HCT116 (cell line): ENCODE measurements at regions of chr1 and their contacts with region 1.

Region 1: GRCh38 chr1:1349256-1350012 is at the start of gene DVL1:
- DNase-seq: no peak
- ATAC-seq: peak; percentile 29
- H3K4me3 ChIP-seq: peak within 1 kb of the TSS; percentile 80 to 87
- H3K27ac ChIP-seq: peak within 1 kb of the TSS; percentile 100
- H3K4me1 ChIP-seq: peaks cover 38 to 67% of the 10 kb centered on the region in 2 experiments
- H3K27me3 ChIP-seq: no peaks in the 10 kb centered on the region
- CTCF ChIP-seq: peak in 2 of 3 experiments; percentile 32 to 48; a peak in 3 of 6 replicates
- POLR2A ChIP-seq: no peak
- RAD21 ChIP-seq: no peak
- total RNA-seq, gene DVL1: 160 TPM

Region 2: GRCh38 chr1:1069061-1069708 is 280.2 kb before region 1 on chr1:
- CTCF ChIA-PET with region 1: no interaction called
- POLR2A ChIA-PET with region 1: no interaction called
- RAD21 ChIA-PET with region 1: no interaction called
- intact Hi-C with region 1: loop called (anchors 5 kb)
- DNase-seq: peak; percentile 65
- ATAC-seq: peak; percentile 61
- H3K4me3 ChIP-seq: peak overlapping the region; percentile 50 to 64
- H3K27ac ChIP-seq: peak overlapping the region; percentile 79
- H3K4me1 ChIP-seq: peaks cover 36 to 64% of the 10 kb centered on the region in 2 experiments
- H3K27me3 ChIP-seq: no peaks in the 10 kb centered on the region
- CTCF ChIP-seq: no peak
- POLR2A ChIP-seq: no peak
- RAD21 ChIP-seq: no peak

Region 3: GRCh38 chr1:1307908-1308755 is 41.3 kb before region 1 on chr1 and contains the starts of genes ACAP3 and PUSL1:
- CTCF ChIA-PET with region 1: no interaction called
- POLR2A ChIA-PET with region 1: no interaction called
- RAD21 ChIA-PET with region 1: no interaction called
- intact Hi-C with region 1: loop called (anchors 5 kb)
- DNase-seq: peak; percentile 83
- ATAC-seq: peak; percentile 53
- H3K4me3 ChIP-seq: peak within 1 kb of the TSS; percentile 60 to 86
- H3K27ac ChIP-seq: peak within 1 kb of the TSS; percentile 99
- H3K4me1 ChIP-seq: peaks cover 36 to 55% of the 10 kb centered on the region in 2 experiments
- H3K27me3 ChIP-seq: no peaks in the 10 kb centered on the region
- CTCF ChIP-seq: no peak
- POLR2A ChIP-seq: no peak
- RAD21 ChIP-seq: no peak
- total RNA-seq, gene ACAP3: 38.8 TPM
- total RNA-seq, gene PUSL1: 47.2 TPM

Region 4: DNA sequence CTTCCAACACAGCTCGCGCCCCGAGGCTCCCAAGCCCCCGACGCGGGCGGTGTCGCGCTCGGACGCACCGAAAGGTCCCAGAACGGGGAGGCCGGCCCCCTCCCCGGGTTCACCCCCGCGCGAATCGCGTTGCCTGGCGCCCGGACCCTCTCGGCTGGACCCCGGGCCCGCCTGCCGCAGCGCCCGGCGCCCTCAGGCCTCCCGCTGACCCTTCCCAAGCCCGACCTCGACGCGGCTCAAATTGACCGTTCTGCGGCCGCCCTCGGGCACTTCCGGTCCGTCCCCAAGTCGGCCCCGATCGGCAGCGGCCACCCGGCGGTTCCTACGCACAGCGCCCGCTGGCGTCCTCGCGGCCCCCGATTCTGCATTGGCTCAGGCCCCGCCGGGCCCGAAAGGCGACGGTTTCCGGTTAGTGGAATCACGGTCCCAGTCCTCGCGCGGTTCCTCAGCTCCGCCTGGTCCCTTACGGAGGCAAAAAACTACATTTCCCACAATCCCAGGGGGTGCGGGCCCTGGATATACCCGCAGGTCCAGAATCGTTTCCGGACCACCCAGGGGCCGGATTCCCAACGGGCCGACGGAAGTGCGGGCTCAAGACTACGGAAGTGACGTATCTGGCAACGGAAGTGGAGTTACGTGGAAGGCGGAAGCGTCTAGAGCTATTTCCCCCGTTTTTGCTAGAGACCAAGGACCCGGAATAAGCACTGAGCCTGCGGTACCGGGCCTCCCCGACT is 25.7 kb after region 1 on chr1 and contains the start of gene AURKAIP1:
- CTCF ChIA-PET with region 1: interaction called, 3 read pairs
- POLR2A ChIA-PET with region 1: interaction called, 4 read pairs
- RAD21 ChIA-PET with region 1: interaction called in 1 of 2 experiments, 3 read pairs
- intact Hi-C with region 1: loop called (anchors 2 kb)
- DNase-seq: peak; percentile 100
- ATAC-seq: peak; percentile 89
- H3K4me3 ChIP-seq: peak within 1 kb of the TSS; percentile 73 to 93
- H3K27ac ChIP-seq: peak within 1 kb of the TSS; percentile 99
- H3K4me1 ChIP-seq: peaks cover 14 to 33% of the 10 kb centered on the region in 2 experiments
- H3K27me3 ChIP-seq: no peaks in the 10 kb centered on the region
- CTCF ChIP-seq: peak in 2 of 3 experiments; percentile 16 to 29; a peak in 1 of 6 replicates
- POLR2A ChIP-seq: peak; percentile 59
- RAD21 ChIP-seq: no peak
- total RNA-seq, gene AURKAIP1: 200 TPM

Region 5: GRCh38 chr1:1399187-1399871 is 49.9 kb after region 1 on chr1 and contains the start of gene CCNL2:
- CTCF ChIA-PET with region 1: no interaction called
- POLR2A ChIA-PET with region 1: no interaction called
- RAD21 ChIA-PET with region 1: no interaction called
- intact Hi-C with region 1: loop called (anchors 1 kb)
- DNase-seq: peak; percentile 94
- ATAC-seq: peak; percentile 89
- H3K4me3 ChIP-seq: peak within 1 kb of the TSS; percentile 96 to 99
- H3K27ac ChIP-seq: peak within 1 kb of the TSS; percentile 86
- H3K4me1 ChIP-seq: peaks cover 8 to 46% of the 10 kb centered on the region in 2 experiments; a peak in 3 of 4 replicates
- H3K27me3 ChIP-seq: no peaks in the 10 kb centered on the region
- CTCF ChIP-seq: peak in 2 of 3 experiments; percentile 51 to 64; a peak in 4 of 6 replicates
- POLR2A ChIP-seq: peak; percentile 64
- RAD21 ChIP-seq: no peak
- total RNA-seq, gene CCNL2: 173 TPM

Region 6: DNA sequence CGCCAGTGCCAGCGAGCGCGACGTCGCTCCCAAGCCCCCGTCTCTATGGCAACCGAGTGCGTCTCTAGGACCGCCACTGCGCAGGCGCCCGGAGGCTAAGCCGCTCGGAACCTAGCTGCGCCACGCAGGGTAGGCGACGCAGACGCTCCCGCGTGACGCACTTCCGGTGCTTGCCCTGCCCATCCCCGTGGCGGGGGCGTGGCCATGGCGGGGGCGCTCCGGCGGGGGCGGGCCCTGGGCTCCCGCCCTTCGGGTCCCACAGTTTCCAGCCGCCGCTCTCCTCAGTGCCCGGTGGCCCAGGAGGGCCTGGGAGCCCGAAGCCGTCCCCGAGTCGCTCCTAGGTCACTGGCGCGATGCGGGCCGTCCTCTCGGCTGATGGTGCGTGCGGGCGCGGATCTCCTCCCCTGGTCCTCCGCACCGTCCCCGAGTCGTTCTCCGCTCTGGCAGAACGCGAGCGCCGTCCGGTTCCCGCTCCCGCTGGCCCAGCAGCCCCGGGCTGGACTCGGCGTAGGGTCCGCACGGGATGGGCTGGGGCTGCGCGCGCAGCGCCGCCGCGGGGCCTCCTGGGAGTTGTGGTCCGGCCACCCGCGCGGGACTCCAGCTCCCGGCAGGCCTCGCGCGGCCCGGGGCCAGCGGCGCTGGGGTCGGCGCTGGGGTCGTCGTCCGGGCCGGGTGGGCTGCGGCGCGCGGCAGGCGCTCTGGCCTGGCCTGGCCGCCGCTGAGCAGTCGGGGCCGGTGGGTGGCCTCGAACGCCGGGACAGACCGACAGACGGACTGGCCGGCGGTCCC is 266.0 kb after region 1 on chr1 and contains the start of gene MIB2:
- CTCF ChIA-PET with region 1: no interaction called
- POLR2A ChIA-PET with region 1: no interaction called
- RAD21 ChIA-PET with region 1: no interaction called
- intact Hi-C with region 1: loop called (anchors 10 kb)
- DNase-seq: peak; percentile 95
- ATAC-seq: peak; percentile 86
- H3K4me3 ChIP-seq: peak within 1 kb of the TSS; percentile 85 to 86
- H3K27ac ChIP-seq: peak within 1 kb of the TSS; percentile 100
- H3K4me1 ChIP-seq: peaks cover 11 to 29% of the 10 kb centered on the region in 2 experiments; a peak in 3 of 4 replicates
- H3K27me3 ChIP-seq: no peaks in the 10 kb centered on the region
- CTCF ChIP-seq: no peak
- POLR2A ChIP-seq: peak; percentile 66
- RAD21 ChIP-seq: no peak
- total RNA-seq, gene MIB2: 194 TPM